ENCODE measurements at regions of chr3 and their contacts with region 1.

Region 1: DNA sequence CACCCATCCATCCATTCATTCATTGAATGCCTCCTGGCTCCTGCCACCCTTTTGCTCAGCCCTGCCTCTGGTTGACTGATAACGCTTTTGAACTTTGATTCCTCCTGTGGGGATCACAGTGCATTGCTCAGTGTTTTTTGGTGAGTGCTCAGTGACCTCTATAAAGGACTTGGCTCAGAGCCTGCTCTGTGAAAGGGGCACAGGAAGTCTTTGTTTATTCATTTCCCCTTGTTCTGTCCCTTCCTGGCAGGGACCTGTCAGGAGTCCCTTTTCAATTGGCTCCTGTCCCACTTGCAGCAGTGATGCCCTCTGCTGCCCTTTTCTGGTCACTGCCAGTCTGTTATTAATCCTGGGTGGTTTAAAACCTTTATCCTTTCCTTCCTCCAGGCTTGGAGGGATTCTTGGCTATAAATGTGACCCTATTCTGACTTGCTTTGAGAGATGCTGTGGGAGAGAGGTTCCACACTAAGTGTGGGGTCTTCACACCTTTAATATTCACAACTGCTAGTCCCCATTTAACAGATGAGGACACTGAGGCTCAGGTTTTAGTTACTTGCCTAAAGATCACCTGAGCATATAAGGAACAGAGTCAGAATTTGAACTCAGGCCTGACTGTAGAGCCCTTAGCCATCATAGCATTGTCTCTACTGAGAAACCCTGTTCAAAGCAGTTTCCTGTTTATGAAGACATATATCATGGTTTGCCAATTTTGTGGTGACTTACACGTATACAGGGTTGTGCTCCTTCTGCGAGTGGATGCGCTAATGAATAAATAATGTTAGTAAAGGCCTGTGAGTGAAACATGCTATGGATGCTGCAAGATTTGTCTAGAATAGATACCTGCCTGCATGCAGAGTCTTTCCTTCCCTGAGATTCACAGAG is 23.2 kb upstream of the TATDN2 start:
- DNase-seq: peak; percentile 87
- H3K4me3 ChIP-seq: no peak overlapping the region
- H3K27ac ChIP-seq: no peak overlapping the region
- H3K4me1 ChIP-seq: peaks cover 50% of the 10 kb centered on the region
- H3K27me3 ChIP-seq: no peaks in the 10 kb centered on the region
- CTCF ChIP-seq: peak; percentile 76 to 88
- POLR2A ChIP-seq: no peak

Region 2: GRCh38 chr3:10026084-10026890 is 198.7 kb before region 1 on chr3 and contains the start of gene FANCD2:
- CTCF ChIA-PET with region 1: interaction called, 3 read pairs
- POLR2A ChIA-PET with region 1: no interaction called
- dilution Hi-C with region 1: no loop called
- intact Hi-C with region 1: loop called (anchors 1 kb)
- DNase-seq: peak; percentile 92
- H3K4me3 ChIP-seq: peak within 1 kb of the TSS; percentile 55 to 84 (median 81)
- H3K27ac ChIP-seq: peak within 1 kb of the TSS; percentile 88
- H3K4me1 ChIP-seq: peaks cover 13% of the 10 kb centered on the region
- H3K27me3 ChIP-seq: no peaks in the 10 kb centered on the region
- CTCF ChIP-seq: no peak
- POLR2A ChIP-seq: peak; percentile 79
- total RNA-seq, gene FANCD2: 23.4 and 26.8 TPM in 2 replicates

Region 3: DNA sequence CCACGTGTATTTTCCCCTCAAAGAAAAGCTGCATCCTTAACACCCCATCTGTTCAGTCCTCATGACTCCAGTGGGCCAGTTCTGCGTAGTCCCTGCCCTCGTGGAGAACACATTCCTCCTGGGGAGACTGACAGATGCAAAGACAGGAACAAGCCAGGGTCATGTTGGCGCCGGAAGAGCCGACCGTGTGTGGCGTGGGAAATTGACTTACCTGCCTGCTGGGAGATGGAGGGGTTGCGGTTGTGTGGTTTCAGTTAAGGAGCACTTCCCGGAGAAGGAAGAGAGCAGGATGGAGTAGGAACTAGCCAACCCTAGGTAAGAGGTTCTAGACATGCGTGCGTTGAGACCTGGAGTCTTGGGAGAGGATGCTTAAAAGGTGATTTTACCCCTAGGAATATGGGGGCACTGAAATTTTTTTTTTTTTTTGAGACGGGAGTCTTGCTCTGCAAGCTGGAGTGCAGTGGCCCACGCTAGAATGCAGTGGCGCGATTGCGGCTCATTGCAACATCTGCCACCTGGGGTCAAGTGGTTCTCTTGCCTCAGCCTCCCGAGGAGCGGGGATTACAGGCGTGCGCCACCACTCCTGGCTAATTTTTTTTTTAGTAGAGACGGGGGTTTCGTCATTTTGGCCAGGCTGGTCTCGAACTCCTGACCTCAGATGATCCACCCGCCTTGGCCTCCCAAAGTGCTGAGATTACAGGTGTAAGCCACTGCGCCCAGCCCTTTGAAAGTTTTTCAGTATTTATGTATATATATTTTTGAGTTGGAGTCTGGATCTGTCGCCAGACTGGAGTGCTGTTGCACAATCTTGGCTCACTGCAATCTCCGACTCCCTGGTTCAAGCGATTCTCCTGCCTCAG is 82.1 kb before region 1 on chr3:
- CTCF ChIA-PET with region 1: no interaction called
- POLR2A ChIA-PET with region 1: no interaction called
- dilution Hi-C with region 1: no loop called
- intact Hi-C with region 1: loop called (anchors 1 kb)
- DNase-seq: no peak
- H3K4me3 ChIP-seq: peak overlapping the region; percentile 52 to 74 (median 60)
- H3K27ac ChIP-seq: no peak overlapping the region
- H3K4me1 ChIP-seq: peaks cover 11% of the 10 kb centered on the region
- H3K27me3 ChIP-seq: no peaks in the 10 kb centered on the region
- CTCF ChIP-seq: no peak
- POLR2A ChIP-seq: no peak

Region 4: DNA sequence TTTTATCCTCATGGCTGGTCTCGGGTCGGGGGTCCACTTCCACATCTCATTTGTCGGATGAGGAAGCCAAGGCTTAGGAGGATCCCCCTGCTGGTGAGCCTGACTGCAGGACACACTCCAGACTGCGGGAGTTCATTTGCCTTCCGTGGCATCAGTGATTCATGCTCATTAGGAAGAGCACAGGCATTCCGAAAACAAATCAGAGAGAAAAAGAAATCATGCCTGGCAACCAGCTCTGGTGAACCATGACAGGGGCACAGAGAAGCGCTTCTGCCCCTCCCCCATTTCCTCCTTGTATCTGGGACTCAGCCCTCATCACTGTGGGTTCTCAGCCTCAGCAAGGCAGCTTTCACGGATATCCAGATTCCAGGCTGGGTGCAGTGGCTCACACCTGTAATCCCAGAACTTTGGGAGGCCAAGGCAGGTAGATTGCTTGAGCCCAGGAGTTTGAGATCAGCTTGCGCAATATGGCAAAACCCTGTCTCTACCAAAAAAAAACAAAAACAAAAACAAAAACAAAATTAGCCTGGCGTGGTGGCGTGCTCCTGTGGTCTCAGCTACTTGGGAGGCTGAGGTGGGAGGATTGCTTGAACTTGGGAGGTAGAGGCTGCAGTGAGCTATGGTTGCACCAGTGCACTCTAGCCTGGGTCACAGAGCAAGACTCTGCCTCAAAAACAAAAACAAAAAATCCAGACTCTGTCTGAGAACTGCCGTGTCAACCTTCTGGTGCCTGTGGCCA is 31.9 kb before region 1 on chr3:
- CTCF ChIA-PET with region 1: interaction called, 12 read pairs
- POLR2A ChIA-PET with region 1: no interaction called
- dilution Hi-C with region 1: no loop called
- intact Hi-C with region 1: loop called (anchors 1 kb)
- DNase-seq: peak; percentile 92
- H3K4me3 ChIP-seq: no peak overlapping the region
- H3K27ac ChIP-seq: peak overlapping the region; percentile 100
- H3K4me1 ChIP-seq: peaks cover 54% of the 10 kb centered on the region
- H3K27me3 ChIP-seq: no peaks in the 10 kb centered on the region
- CTCF ChIP-seq: peak; percentile 81 to 84
- POLR2A ChIP-seq: no peak

Region 5: DNA sequence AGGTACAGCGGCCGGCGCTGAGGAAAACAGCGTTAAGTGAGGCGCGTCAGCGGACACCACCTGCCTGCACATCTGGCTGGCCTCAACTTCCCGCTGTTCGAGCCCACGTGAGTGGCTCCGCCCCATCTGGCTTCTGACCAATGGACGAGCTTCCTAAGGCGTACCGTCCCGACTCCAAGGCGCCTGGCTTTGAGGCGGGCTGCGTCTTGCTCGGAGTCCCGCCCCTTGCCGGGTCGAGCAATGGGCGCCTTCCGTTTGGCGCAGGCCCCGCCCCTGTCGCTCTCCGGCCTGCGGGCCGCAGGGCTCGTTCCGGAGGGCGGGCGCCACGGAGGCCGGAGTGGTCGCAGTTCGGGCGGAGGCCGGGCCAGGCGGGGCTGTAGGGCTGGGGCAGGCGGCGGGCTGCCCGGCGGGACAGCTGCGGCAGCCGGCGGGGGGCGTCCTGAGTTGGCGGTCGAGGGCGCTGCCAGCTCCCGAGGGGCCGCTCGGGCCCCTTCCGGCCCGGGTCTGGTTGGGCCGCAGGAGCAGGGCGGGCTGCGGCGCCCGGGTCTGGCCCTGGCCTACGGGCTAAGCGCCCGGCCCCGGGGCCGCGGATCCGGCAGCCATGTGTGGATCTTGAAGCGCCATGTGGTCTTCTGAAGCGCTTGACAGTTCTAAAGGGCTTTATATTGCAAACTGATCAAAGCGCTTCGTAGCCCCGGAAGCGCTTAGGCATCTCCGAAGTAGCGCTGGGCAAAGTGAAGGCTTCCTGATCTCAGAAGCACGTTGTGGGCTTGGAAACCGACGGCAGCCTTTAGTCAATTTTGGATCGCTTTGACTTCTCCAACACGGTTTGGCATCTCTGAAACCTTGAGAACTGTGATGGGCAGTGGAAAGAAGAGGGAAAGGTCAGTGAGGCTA is 23.4 kb after region 1 on chr3 and contains the start of gene TATDN2:
- CTCF ChIA-PET with region 1: interaction called, 4 read pairs
- POLR2A ChIA-PET with region 1: no interaction called
- dilution Hi-C with region 1: no loop called
- intact Hi-C with region 1: loop called (anchors 1 kb)
- DNase-seq: peak; percentile 95
- H3K4me3 ChIP-seq: peak within 1 kb of the TSS; percentile 20 to 62 (median 58)
- H3K27ac ChIP-seq: peak within 1 kb of the TSS; percentile 18
- H3K4me1 ChIP-seq: peaks cover 14% of the 10 kb centered on the region
- H3K27me3 ChIP-seq: no peaks in the 10 kb centered on the region
- CTCF ChIP-seq: no peak
- POLR2A ChIP-seq: peak; percentile 97
- total RNA-seq, gene TATDN2: 26.8 and 31.7 TPM in 2 replicates

Region 6: GRCh38 chr3:10373686-10374261 is 148.7 kb after region 1 on chr3:
- CTCF ChIA-PET with region 1: no interaction called
- POLR2A ChIA-PET with region 1: no interaction called
- dilution Hi-C with region 1: no loop called
- intact Hi-C with region 1: no loop called
- DNase-seq: no peak
- H3K4me3 ChIP-seq: no peak overlapping the region
- H3K27ac ChIP-seq: no peak overlapping the region
- H3K4me1 ChIP-seq: no peaks in the 10 kb centered on the region
- H3K27me3 ChIP-seq: no peaks in the 10 kb centered on the region
- CTCF ChIP-seq: no peak
- POLR2A ChIP-seq: no peak

Region 7: GRCh38 chr3:10883478-10884234 is 658.6 kb after region 1 on chr3:
- CTCF ChIA-PET with region 1: no interaction called
- POLR2A ChIA-PET with region 1: no interaction called
- dilution Hi-C with region 1: no loop called
- intact Hi-C with region 1: no loop called
- DNase-seq: peak; percentile 6
- H3K4me3 ChIP-seq: no peak overlapping the region
- H3K27ac ChIP-seq: no peak overlapping the region
- H3K4me1 ChIP-seq: no peaks in the 10 kb centered on the region
- H3K27me3 ChIP-seq: no peaks in the 10 kb centered on the region
- CTCF ChIP-seq: peak; percentile 24 to 32
- POLR2A ChIP-seq: no peak

Measured in endothelial cell of umbilical vein (primary cell).